ENCODE measurements at regions of chr5 and their contacts with region 1.

Region 1: DNA sequence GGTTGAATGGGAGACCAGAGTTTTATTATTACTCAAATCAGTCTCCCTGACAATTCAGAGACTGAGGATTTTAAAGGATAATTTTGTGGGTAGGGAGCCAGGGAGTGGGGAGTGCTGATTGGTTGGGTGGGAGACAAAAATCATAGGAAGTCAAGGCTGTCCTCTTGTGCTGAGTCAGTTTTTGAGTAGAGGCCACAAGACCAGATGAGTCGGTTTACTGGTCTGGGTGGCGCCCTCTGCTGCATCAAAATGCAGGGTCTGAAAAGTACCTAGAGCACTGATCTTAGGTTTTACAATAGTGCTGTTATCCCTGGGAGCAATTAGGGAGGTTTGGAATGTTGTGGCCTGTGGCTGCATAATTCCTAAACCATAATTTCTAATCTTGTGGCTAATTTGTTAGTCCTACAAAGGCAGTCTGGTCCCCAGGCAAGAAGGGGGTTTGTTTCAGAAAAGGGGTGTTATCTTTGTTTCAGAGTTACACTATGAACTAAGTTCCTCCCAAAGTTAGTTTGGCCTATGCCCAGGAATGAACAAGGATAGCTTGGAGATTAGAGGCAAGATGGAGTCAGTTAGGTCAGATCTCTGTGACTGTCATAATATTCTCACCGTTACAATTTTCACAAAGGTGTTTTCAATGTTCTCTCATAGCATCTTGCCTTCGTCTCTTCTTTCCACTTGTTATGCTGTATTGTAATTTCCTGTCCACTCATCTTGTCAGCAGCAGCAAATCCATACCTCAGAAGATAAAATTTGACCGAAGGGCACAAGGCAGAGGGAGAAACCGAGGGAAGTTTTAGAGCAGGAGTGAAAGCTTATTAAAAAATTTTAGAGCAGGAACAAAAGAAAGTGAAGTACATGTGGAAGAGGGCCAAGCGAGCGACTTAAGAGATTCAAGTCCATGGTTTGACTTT is 59.2 kb upstream of the CLINT1 start:
- DNase-seq: peak; percentile 32
- H3K4me3 ChIP-seq: no peak overlapping the region
- H3K27ac ChIP-seq: no peak overlapping the region
- H3K27me3 ChIP-seq: no peaks in the 10 kb centered on the region
- CTCF ChIP-seq: peak; percentile 67

Region 2: GRCh38 chr5:157820593-157821252 is 97.4 kb before region 1 on chr5:
- CTCF ChIA-PET with region 1: interaction called, 11 read pairs
- POLR2A ChIA-PET with region 1: no interaction called
- DNase-seq: peak; percentile 6
- H3K4me3 ChIP-seq: no peak overlapping the region
- H3K27ac ChIP-seq: no peak overlapping the region
- H3K27me3 ChIP-seq: no peaks in the 10 kb centered on the region
- CTCF ChIP-seq: peak; percentile 68

Region 3: DNA sequence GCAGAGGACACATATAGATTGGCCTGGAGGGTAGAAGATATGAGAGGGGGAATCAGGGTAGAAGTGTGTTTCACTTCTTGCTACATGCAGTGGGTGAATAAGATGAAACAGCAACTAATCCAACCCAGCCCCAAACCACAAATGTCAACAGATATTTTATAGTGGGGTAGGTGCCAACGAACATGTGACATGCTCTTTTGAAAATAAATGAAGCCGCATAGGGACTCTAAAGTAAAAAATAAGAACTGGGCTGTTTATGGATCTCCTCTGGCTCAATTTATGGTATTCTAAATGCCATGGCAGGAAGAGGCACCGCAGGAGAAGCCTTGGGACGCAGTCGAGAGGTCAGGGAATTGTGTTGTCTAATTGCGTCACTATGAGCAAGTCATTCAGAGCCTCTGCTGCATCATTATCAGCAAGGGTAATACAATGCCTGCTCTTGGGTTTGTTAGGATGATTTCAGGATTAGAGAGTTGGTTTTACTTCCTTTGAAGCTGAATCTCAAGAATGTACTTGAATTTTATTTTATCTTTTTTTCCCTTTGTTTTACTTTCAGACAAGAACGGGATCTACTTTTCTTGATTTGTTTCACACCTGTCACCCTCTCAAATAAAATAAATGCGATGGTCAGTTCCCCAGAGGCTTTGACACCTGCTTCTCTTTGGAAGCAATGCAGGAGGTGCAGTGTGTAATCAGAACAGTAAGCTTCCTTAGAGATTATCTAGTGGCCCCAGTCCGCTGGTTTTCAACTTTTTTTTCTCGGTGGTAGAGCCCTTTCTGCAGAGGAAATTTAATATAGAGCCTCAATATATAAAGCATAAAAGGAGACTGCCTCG is 316.4 kb after region 1 on chr5:
- CTCF ChIA-PET with region 1: no interaction called
- POLR2A ChIA-PET with region 1: no interaction called
- DNase-seq: no peak
- H3K4me3 ChIP-seq: no peak overlapping the region
- H3K27ac ChIP-seq: no peak overlapping the region
- H3K27me3 ChIP-seq: no peaks in the 10 kb centered on the region
- CTCF ChIP-seq: no peak